ENCODE measurements at regions of chr1 and their contacts with region 1.

Region 1: DNA sequence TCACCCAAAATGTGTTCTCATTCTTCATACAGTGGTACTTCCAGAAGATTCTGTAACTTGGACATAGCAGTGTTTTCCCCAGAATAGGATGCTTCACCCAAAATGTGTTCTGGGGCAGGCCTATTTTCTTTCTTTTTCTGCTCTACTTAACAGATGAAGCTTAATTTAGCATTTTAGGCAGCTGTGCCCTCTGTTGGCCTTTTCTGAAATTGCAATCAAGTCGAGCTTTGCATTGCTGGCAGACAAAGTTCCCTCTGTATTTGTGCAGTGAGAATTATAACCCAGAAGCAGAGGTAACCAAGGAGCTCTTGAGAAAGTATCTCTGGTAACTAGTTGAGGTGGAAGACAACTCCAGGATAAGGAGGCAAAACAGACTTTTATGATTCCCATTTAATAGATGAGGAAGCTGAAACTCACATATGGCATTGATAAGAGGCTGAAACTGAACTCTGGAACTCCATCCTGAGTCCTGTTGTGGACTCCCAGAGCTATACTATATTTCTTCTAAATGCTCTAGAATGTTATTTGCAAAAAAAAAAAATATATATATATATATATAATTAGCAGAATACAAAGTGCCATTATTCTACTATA is 50.3 kb upstream of the L1TD1 start:
- DNase-seq: peak; percentile 31
- ATAC-seq: peak; percentile 61
- H3K4me3 ChIP-seq: no peak overlapping the region
- H3K27ac ChIP-seq: no peak overlapping the region
- H3K4me1 ChIP-seq: no peaks in the 10 kb centered on the region
- H3K27me3 ChIP-seq: no peaks in the 10 kb centered on the region
- CTCF ChIP-seq: peak; percentile 49 to 74 (median 68); a peak in 5 of 6 replicates
- POLR2A ChIP-seq: no peak
- RAD21 ChIP-seq: peak; percentile 67

Region 2: GRCh38 chr1:61950418-61950817 is 193.9 kb before region 1 on chr1:
- CTCF ChIA-PET with region 1: no interaction called
- POLR2A ChIA-PET with region 1: no interaction called
- RAD21 ChIA-PET with region 1: no interaction called
- intact Hi-C with region 1: loop called (anchors 10 kb)
- DNase-seq: no peak
- ATAC-seq: peak; percentile 63
- H3K4me3 ChIP-seq: no peak overlapping the region
- H3K27ac ChIP-seq: no peak overlapping the region
- H3K4me1 ChIP-seq: no peaks in the 10 kb centered on the region
- H3K27me3 ChIP-seq: no peaks in the 10 kb centered on the region
- CTCF ChIP-seq: peak; percentile 11 to 62 (median 46); a peak in 4 of 6 replicates
- POLR2A ChIP-seq: no peak
- RAD21 ChIP-seq: peak; percentile 40; the same call in 1 of the 2 replicates

Region 3: GRCh38 chr1:62082456-62083363 is 61.6 kb before region 1 on chr1:
- CTCF ChIA-PET with region 1: interaction called, 26 read pairs
- POLR2A ChIA-PET with region 1: no interaction called
- RAD21 ChIA-PET with region 1: interaction called, 3 to 8 read pairs
- intact Hi-C with region 1: loop called (anchors 1 kb)
- DNase-seq: no peak
- ATAC-seq: peak; percentile 91
- H3K4me3 ChIP-seq: no peak overlapping the region
- H3K27ac ChIP-seq: no peak overlapping the region
- H3K4me1 ChIP-seq: no peaks in the 10 kb centered on the region
- H3K27me3 ChIP-seq: no peaks in the 10 kb centered on the region
- CTCF ChIP-seq: peak; percentile 64 to 97 (median 95); a peak in 5 of 6 replicates
- POLR2A ChIP-seq: no peak
- RAD21 ChIP-seq: peak; percentile 57

Region 4: GRCh38 chr1:62093261-62093660 is 51.1 kb before region 1 on chr1:
- CTCF ChIA-PET with region 1: no interaction called
- POLR2A ChIA-PET with region 1: no interaction called
- RAD21 ChIA-PET with region 1: no interaction called
- intact Hi-C with region 1: no loop called
- DNase-seq: no peak
- ATAC-seq: no peak
- H3K4me3 ChIP-seq: no peak overlapping the region
- H3K27ac ChIP-seq: no peak overlapping the region
- H3K4me1 ChIP-seq: peaks cover 0 to 3% of the 10 kb centered on the region in 2 experiments; a peak in 2 of 4 replicates
- H3K27me3 ChIP-seq: no peaks in the 10 kb centered on the region
- CTCF ChIP-seq: no peak
- POLR2A ChIP-seq: no peak
- RAD21 ChIP-seq: no peak

Region 5: DNA sequence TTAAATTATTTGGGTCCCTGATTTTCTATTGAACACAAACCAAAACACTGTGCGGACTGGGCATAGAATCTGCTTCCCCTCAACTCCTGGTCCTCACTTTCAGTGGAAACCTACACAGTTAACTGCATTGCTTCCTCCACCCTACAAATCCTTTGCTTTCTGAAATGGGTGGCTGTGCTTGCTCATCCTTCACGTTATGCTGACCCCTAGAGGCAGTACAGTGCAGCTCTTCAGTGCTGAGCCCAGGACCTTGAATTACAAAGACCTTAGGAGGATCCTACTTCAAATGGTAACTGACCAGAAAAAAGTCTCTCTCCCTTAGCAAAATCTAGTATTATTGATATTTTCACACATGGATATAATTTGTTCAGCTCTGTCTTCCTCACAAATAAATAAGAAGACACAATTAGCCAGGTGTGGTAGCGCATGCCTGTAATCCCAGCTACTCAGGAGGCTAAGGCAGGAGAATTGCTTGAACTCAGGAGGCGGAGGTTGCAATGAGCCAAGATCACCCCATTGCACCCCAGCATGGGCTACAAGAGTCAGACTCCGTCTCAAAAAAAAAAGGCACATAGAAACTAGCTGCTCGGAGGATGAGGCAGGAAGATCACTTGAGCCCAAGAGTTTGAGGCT is 13.1 kb before region 1 on chr1:
- CTCF ChIA-PET with region 1: interaction called, 14 read pairs
- POLR2A ChIA-PET with region 1: interaction called, 3 read pairs
- RAD21 ChIA-PET with region 1: no interaction called
- intact Hi-C with region 1: no loop called
- DNase-seq: no peak
- ATAC-seq: peak; percentile 94
- H3K4me3 ChIP-seq: no peak overlapping the region
- H3K27ac ChIP-seq: no peak overlapping the region
- H3K4me1 ChIP-seq: peaks cover 0 to 12% of the 10 kb centered on the region in 2 experiments; a peak in 1 of 4 replicates
- H3K27me3 ChIP-seq: no peaks in the 10 kb centered on the region
- CTCF ChIP-seq: peak; percentile 34 to 61 (median 57); a peak in 5 of 6 replicates
- POLR2A ChIP-seq: no peak
- RAD21 ChIP-seq: peak; percentile 62

Region 6: GRCh38 chr1:62599044-62599443 is 454.7 kb after region 1 on chr1:
- CTCF ChIA-PET with region 1: no interaction called
- POLR2A ChIA-PET with region 1: no interaction called
- RAD21 ChIA-PET with region 1: no interaction called
- intact Hi-C with region 1: no loop called
- DNase-seq: no peak
- ATAC-seq: no peak
- H3K4me3 ChIP-seq: no peak overlapping the region
- H3K27ac ChIP-seq: no peak overlapping the region
- H3K4me1 ChIP-seq: no peaks in the 10 kb centered on the region
- H3K27me3 ChIP-seq: no peaks in the 10 kb centered on the region
- CTCF ChIP-seq: no peak
- POLR2A ChIP-seq: no peak
- RAD21 ChIP-seq: no peak

Region 7: DNA sequence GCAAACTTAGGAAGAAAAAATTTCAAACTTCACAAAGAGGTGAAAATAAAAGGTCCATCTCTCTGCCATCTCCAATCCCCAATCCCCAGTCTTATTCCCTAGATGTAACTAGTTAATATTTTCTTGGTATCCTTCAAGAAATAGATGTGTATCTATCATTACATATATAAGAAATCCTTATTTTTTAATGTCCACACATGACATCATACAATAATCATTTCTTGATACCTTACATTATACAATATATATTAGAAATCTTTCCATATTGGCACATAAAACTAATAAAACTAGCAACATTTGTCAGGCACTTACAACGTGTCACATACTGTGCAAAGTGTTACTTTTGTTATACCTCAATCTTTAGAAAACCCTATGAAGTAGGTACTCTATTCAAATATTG is 527.7 kb after region 1 on chr1:
- CTCF ChIA-PET with region 1: no interaction called
- POLR2A ChIA-PET with region 1: no interaction called
- RAD21 ChIA-PET with region 1: no interaction called
- intact Hi-C with region 1: no loop called
- DNase-seq: no peak
- ATAC-seq: no peak
- H3K4me3 ChIP-seq: no peak overlapping the region
- H3K27ac ChIP-seq: no peak overlapping the region
- H3K4me1 ChIP-seq: no peaks in the 10 kb centered on the region
- H3K27me3 ChIP-seq: no peaks in the 10 kb centered on the region
- CTCF ChIP-seq: no peak
- POLR2A ChIP-seq: no peak
- RAD21 ChIP-seq: no peak